ENCODE measurements at regions of chr5 and their contacts with region 1.

Region 1: GRCh38 chr5:148831590-148832565 is 5.5 kb downstream of the ADRB2 start:
- DNase-seq: no peak
- ATAC-seq: peak; percentile 70
- H3K4me3 Mint-ChIP-seq: peak overlapping the region; percentile 76
- H3K27ac Mint-ChIP-seq: peak overlapping the region; percentile 98
- H3K4me1 Mint-ChIP-seq: peaks cover 97% of the 10 kb centered on the region
- H3K27me3 Mint-ChIP-seq: no peaks in the 10 kb centered on the region
- CTCF ChIP-seq: no peak

Region 2: GRCh38 chr5:148791334-148791667 is 40.6 kb before region 1 on chr5:
- CTCF ChIA-PET with region 1: interaction called, 3 read pairs
- POLR2A ChIA-PET with region 1: interaction called, 6 read pairs
- intact Hi-C with region 1: loop called (anchors 5 kb)
- DNase-seq: no peak
- ATAC-seq: peak; percentile 55
- H3K4me3 Mint-ChIP-seq: no peak overlapping the region
- H3K27ac Mint-ChIP-seq: no peak overlapping the region
- H3K4me1 Mint-ChIP-seq: peaks cover 42% of the 10 kb centered on the region
- H3K27me3 Mint-ChIP-seq: no peaks in the 10 kb centered on the region
- CTCF ChIP-seq: no peak

Region 3: DNA sequence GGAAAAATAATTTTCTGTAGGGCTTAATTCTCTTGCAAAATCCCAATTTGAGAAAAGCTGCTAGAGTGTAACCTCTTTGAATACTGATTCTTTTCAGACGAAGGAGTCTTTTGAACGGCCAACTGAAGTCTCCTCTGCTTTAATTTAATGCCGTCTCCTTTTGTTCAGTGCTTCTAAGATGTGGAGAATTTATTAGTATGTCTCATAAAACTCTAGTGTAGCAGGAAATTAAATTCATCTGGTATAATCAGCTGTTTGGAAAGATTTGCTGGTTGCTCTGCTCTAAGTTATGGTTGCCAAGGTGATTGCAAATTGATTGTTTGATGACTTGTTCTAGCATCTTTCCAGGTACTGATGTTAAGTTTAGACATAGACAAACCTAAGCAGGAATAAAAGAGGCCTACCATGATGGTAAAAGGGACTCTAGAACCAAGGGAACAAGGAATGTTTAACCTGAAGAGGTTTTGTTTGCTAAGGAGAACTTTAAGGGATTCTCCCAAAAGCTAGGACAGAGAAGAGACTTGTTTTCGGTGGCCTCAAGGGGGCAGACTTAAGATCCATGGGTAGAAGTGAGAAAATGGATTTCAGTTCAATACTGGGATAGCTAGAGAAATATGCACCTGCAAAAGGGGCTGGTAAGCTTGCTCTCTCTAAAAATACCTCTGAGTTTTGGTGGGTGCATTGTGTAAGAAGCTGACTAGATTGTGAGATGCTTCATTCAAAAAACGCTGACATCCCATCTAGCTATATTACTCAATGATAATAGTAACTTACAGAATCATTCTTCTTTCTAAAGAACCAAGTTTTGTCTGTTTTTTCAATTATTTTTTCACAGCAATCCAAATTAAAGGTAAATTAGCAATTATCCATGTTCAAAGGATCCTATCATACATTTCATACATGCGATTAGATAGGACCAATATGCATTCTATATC is 11.2 kb before region 1 on chr5:
- CTCF ChIA-PET with region 1: interaction called, 31 read pairs
- POLR2A ChIA-PET with region 1: interaction called, 14 read pairs
- intact Hi-C with region 1: no loop called
- DNase-seq: no peak
- ATAC-seq: peak; percentile 48
- H3K4me3 Mint-ChIP-seq: no peak overlapping the region
- H3K27ac Mint-ChIP-seq: no peak overlapping the region
- H3K4me1 Mint-ChIP-seq: peaks cover 56% of the 10 kb centered on the region
- H3K27me3 Mint-ChIP-seq: no peaks in the 10 kb centered on the region
- CTCF ChIP-seq: no peak

Region 4: GRCh38 chr5:148849461-148849860 is 17.6 kb after region 1 on chr5:
- CTCF ChIA-PET with region 1: no interaction called
- POLR2A ChIA-PET with region 1: no interaction called
- intact Hi-C with region 1: loop called (anchors 2 kb)
- DNase-seq: no peak
- ATAC-seq: peak; percentile 81
- H3K4me3 Mint-ChIP-seq: no peak overlapping the region
- H3K27ac Mint-ChIP-seq: no peak overlapping the region
- H3K4me1 Mint-ChIP-seq: peaks cover 25% of the 10 kb centered on the region
- H3K27me3 Mint-ChIP-seq: no peaks in the 10 kb centered on the region
- CTCF ChIP-seq: no peak

Region 5: DNA sequence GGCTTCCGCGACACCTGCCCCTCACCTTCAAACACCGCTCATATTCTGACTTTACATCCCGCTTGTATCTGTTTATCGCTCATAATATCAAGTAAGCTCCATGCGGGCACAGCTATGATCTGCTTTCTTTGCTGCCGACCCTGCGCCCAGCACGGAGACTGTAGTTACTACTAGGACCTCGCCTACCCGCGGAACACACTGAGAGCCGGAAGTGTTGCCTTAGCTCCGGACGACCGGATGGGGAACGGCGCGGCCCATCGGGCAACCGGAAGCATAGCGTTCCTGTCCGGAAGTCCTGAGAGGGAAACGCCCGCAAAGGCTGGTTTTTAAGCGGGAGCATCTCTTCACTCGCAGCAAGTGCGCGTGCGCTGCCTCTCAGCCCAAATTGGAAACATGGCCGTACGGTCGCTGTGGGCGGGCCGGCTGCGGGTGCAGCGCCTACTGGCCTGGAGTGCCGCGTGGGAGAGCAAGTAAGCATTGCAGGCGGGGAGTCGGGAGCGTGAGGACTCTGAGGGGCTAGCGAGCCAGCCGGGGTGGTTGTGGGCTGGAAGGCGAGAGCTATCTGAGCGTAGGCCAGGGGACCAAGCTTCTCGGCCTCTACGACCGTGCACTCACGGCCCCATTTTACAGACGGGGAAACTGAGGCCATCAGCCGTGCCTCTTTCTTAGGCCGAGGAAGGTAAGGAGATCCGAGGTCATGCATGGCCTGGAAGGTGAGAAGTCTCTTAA is 513.4 kb after region 1 on chr5 and contains the start of gene GRPEL2:
- CTCF ChIA-PET with region 1: no interaction called
- POLR2A ChIA-PET with region 1: no interaction called
- intact Hi-C with region 1: loop called (anchors 10 kb)
- DNase-seq: peak; percentile 79
- ATAC-seq: peak; percentile 91
- H3K4me3 Mint-ChIP-seq: peak within 1 kb of the TSS; percentile 97
- H3K27ac Mint-ChIP-seq: peak within 1 kb of the TSS; percentile 97
- H3K4me1 Mint-ChIP-seq: peaks cover 34% of the 10 kb centered on the region
- H3K27me3 Mint-ChIP-seq: no peaks in the 10 kb centered on the region
- CTCF ChIP-seq: no peak
- total RNA-seq, gene GRPEL2: 13.2 and 14.0 TPM in 2 replicates

Measured in activated B cell treated with CpG ODN at 0.5 μM for 24 hours (primary cell).